Esophagus muscularis mucosa (tissue), 4 donors: ENCODE measurements at regions of chr6 and their contacts with region 1.

Region 1: DNA sequence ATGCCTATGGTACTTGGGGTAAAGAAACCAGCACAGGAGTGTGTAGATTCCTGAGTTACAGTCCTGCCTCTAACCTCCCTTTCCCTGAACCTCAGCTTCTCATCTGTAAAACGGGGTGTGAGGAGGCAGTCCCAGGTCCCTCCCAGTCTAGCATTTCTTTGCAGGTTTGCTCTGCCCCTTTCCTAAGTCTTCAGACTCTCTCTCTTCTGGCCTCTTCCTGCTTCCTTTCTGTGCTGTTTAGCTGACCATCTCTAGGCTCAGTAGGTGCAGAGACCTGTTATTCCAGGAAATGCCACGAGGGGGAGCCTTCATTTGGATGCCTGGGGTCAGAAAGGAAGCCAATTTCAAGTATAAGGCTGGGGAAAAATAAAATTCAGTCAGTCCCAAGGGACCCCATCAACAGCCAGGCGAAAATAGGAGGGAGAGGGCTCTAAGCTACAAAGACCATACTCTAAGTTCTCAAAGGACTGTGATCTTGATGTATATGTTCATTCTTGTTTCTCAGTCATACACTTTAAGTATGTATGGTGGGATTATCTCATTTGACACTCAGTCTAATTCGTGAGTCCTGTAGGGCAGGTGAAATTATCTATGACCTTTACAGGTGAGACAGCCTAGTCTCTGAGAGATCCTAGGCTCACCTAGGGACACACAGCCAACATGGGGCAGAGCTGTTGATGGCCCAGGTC is 89.1 kb downstream of the NCR2 start:
- DNase-seq: peak; percentile 96
- H3K4me3 ChIP-seq: no peak overlapping the region
- H3K27ac ChIP-seq: no peak overlapping the region
- H3K4me1 ChIP-seq: peaks cover 16 to 41% (median 36%) of the 10 kb centered on the region in 4 donors
- H3K27me3 ChIP-seq: no peaks in the 10 kb centered on the region
- CTCF ChIP-seq: peak; percentile 81 to 90 (median 90)
- EP300 ChIP-seq: no peak
- POLR2A ChIP-seq: no peak

Region 2: DNA sequence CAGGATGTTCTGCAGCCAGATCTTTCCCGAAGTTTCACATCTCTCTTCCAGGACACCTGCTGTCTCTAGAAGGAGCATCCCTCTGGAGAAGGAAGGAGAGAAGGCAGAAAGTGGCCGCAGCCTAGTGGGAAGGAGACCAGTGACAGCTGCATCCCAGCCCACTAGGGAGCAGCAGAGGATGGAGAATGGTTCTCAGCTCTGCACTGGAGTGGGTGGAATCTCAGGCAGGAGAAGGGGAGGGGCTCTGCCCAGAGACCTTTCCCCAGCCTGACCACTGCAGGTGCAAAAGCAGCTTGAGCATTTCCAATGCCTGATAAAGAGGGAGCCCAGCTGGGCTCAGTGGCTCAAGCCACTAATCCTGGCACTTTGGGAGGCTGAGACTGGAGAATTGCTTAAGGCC is 56.8 kb before region 1 on chr6:
- intact Hi-C with region 1: loop called (anchors 5 kb)
- DNase-seq: no peak
- H3K4me3 ChIP-seq: no peak overlapping the region
- H3K27ac ChIP-seq: no peak overlapping the region
- H3K4me1 ChIP-seq: peaks cover 9 to 26% (median 23%) of the 10 kb centered on the region in 4 donors
- H3K27me3 ChIP-seq: peaks cover 0 to 80% (median 7%) of the 10 kb centered on the region in 4 donors
- CTCF ChIP-seq: peak; percentile 29 to 41 (median 39)
- EP300 ChIP-seq: no peak
- POLR2A ChIP-seq: no peak

Region 3: GRCh38 chr6:41463062-41463930 is 38.8 kb after region 1 on chr6:
- intact Hi-C with region 1: no loop called
- DNase-seq: no peak
- H3K4me3 ChIP-seq: no peak overlapping the region
- H3K27ac ChIP-seq: no peak overlapping the region
- H3K4me1 ChIP-seq: no peaks in the 10 kb centered on the region
- H3K27me3 ChIP-seq: peaks cover 0 to 31% (median 0%) of the 10 kb centered on the region in 4 donors
- CTCF ChIP-seq: peak; percentile 50 to 60 (median 57)
- EP300 ChIP-seq: no peak
- POLR2A ChIP-seq: no peak

Region 4: GRCh38 chr6:41505122-41506049 is 80.9 kb after region 1 on chr6:
- intact Hi-C with region 1: loop called (anchors 5 kb)
- DNase-seq: peak; percentile 93
- H3K4me3 ChIP-seq: peak overlapping the region; percentile 46 to 60 (median 50)
- H3K27ac ChIP-seq: peak overlapping the region; percentile 73 to 80 (median 78)
- H3K4me1 ChIP-seq: peaks cover 20 to 40% (median 35%) of the 10 kb centered on the region in 4 donors
- H3K27me3 ChIP-seq: peaks cover 0 to 21% (median 0%) of the 10 kb centered on the region in 4 donors
- CTCF ChIP-seq: no peak
- EP300 ChIP-seq: no peak
- POLR2A ChIP-seq: no peak

Region 5: DNA sequence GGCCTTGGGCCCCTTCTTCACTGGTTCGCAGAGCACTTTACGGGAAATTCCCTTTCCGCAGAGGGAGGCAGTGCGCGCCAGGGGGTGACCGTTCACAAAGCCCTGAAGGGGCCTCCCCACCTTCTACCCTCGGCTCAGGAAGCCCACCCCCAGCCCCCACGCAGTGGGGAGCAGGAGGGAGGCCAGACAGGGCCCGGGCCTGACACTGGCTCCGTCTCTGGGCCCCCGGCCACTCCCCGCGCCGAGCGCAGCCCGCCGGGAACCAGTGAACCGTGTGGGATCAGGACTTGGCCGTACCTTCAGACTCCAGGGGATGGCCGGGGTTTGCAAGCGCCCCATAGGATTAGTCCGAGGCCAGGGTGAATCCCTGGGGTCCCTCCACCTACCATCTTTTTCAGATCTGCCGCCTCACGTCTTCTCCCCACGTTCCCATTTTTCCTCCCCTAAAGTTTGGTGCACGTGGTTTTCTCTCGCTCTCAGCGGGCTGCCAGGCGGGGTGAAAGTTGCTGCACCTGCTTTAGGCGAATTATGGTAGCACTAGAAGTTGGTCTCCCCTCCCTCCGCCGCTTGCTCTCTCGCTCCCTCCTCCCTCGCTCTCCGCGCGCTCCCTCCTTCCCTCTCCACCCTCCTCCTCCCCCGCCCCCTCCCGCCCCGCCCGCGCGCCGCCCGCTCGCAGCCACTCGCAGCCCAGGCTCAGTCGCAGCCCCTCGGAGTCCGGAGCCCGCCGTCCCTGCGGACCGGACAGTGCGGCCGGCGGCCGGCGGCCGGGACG is 121.4 kb after region 1 on chr6 and contains the start of gene FOXP4:
- intact Hi-C with region 1: loop called (anchors 2 kb)
- DNase-seq: peak; percentile 97
- H3K4me3 ChIP-seq: peak within 1 kb of the TSS; percentile 85 to 98 (median 93)
- H3K27ac ChIP-seq: peak within 1 kb of the TSS; percentile 85 to 92 (median 88)
- H3K4me1 ChIP-seq: peaks cover 38 to 54% (median 49%) of the 10 kb centered on the region in 4 donors
- H3K27me3 ChIP-seq: peaks cover 0 to 4% (median 0%) of the 10 kb centered on the region in 4 donors
- CTCF ChIP-seq: no peak
- EP300 ChIP-seq: no peak
- POLR2A ChIP-seq: no peak
- total RNA-seq, gene FOXP4: 10.8 to 30.7 (median 17.7) TPM

Region 6: DNA sequence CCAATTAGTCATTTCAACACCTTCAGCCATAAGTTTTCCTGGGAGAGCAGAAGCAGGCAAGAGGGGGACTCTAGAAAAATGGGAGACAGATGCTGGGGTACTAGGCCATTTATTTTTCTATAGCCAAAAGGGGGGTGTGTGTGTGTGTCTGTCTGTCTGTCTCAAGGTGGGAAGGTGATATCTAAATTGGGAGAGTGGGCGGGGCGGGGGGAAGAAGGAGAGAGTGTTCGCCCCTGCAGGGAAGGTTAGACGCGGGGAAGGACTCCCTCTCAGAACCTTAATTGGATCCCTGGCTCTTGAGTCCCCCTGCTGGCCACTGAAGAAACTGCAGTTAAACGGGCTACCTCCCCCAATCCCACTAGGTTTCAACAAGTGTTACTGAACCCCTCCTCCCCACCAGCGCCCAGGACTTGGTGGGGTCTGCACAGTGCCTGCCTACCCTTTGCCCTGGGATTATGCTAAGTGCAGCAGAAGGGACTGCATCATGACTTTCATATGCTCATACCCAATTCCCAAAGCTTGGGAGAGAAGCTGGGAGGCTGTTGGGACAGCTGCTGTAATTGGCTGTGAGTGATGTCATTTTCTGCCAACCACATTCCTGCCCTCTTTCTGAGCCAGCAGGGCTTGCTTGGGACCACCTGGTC is 167.5 kb after region 1 on chr6:
- intact Hi-C with region 1: loop called (anchors 1 kb)
- DNase-seq: peak; percentile 95
- H3K4me3 ChIP-seq: no peak overlapping the region
- H3K27ac ChIP-seq: no peak overlapping the region
- H3K4me1 ChIP-seq: no peaks in the 10 kb centered on the region
- H3K27me3 ChIP-seq: no peaks in the 10 kb centered on the region
- CTCF ChIP-seq: peak; percentile 90 to 95 (median 93)
- EP300 ChIP-seq: no peak
- POLR2A ChIP-seq: no peak

Region 7: GRCh38 chr6:41683510-41684310 is 259.2 kb after region 1 on chr6:
- intact Hi-C with region 1: loop called (anchors 10 kb)
- DNase-seq: peak; percentile 95
- H3K4me3 ChIP-seq: peak overlapping the region; percentile 50 to 62 (median 54)
- H3K27ac ChIP-seq: peak overlapping the region; percentile 56 to 71 (median 62)
- H3K4me1 ChIP-seq: peaks cover 18 to 27% (median 22%) of the 10 kb centered on the region in 4 donors
- H3K27me3 ChIP-seq: no peaks in the 10 kb centered on the region
- CTCF ChIP-seq: peak in 2 of 3 experiments; percentile 89 to 94
- EP300 ChIP-seq: no peak
- POLR2A ChIP-seq: no peak